Posterior vena cava (tissue), 2 donors: ENCODE measurements at regions of chr2 and their contacts with region 1.

Region 1: GRCh38 chr2:44305882-44306281 is 30.6 kb downstream of the SLC3A1 start:
- DNase-seq: no peak

Region 2: DNA sequence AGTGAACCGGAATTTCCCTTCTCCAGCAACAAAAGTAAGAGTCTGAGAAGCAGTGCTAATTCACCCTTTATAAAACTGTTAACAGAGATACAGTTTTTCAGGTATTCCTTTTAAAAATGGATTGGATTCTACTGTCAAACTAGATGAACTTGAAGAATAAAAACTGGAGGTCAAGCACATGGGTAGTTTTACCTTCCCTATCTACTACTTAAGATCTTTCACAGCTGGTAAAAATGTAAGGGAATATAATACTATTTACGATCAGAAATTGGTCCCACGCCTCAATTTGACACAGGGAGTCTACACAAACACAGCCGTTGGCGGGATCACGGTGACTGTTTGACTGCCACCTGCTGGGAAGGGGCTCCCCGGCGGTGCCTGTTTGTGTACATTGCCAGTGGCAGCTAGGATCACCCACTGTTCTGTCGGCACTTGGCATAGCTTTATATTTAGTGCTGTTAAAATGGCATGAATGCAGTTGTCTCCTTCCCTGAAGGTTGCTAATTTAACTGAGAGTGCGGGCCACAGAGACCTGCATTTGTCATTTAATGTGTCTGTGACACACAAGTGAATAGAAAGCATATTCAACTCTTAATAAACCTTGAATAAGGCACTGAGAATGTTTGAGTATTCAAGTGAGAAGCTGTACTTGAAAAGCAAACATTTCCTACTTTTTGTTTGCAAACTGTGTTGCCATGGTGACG is 407.6 kb before region 1 on chr2:
- intact Hi-C with region 1: loop called in 1 of 2 experiments (anchors 5 kb)
- DNase-seq: no peak

Region 3: DNA sequence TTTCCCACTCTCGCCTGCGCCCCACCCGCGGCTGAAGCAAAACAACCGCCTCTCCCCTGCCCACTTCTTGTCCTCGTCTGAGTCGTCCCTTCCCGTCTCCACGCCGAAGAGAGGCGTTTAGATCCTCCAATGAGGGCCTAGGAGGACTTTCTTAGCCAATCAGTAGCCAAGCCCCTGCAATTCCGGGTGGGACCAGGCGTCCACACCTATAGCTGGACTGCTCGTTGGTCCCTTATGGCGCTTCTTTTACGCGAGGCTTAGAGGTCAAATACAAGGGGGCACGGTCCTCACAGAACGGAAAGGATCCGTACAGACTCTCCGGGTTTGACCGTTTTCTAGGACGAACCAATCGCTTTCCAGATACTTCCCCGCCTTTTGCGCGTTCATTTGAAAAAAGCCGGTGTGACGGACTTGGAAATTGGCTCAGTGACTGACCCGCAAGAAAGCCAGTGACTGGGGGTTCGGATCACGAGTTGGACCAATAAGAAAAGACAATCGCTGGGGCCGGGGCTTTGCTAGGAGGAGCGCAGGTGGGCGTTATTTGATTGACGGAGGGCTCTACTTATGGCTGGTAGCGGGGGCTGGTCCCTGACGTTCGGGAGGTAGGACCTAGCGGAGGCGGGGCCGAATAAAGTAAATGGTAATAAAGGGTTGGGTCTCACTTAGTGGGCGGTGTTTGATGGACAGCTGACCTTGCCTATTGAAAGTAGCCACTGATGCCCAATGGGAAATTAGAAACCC is 137.8 kb before region 1 on chr2:
- intact Hi-C with region 1: no loop called
- DNase-seq: peak; percentile 99

Region 4: DNA sequence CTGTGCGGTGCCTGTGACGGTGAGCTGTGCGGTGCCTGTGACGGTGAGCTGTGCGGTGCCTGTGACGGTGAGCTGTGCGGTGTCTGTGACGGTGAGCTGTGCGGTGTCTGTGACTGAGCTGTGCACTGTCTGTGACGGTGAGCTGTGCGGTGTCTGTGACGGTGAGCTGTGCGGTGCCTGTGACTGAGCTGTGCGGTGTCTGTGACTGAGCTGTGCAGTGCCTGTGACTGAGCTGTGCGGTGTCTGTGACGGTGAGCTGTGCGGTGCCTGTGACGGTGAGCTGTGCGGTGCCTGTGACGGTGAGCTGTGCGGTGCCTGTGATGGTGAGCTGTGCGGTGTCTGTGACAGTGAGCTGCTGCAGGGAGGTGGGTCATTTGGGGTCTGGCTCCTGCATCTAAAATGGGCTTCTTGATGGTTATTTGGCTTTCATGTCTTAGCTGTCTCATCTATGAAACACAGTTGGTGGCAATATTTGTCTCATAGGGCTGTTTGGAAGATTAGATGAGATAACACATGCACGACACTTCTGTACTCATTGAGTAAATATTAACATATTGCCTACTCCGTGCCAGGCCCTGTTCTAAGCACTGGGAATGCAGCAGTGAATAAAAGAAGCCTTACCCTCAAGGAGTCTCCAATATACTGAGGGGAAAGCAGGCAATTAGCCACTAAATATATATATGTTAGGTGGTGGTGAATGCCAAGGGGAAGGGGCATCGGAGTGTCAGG is 19.2 kb before region 1 on chr2:
- intact Hi-C with region 1: no loop called
- DNase-seq: no peak